ENCODE measurements at regions of chr10 and their contacts with region 1.

Region 1: GRCh38 chr10:122565728-122566206 is 5.2 kb downstream of the DMBT1 start:
- DNase-seq: peak; percentile 85
- ATAC-seq: peak; percentile 79
- H3K4me3 ChIP-seq: peak overlapping the region; percentile 25 to 38
- H3K27ac ChIP-seq: no peak overlapping the region
- H3K4me1 ChIP-seq: peaks cover 0 to 4% of the 10 kb centered on the region in 2 experiments; a peak in 1 of 4 replicates
- H3K27me3 ChIP-seq: peaks cover 47% of the 10 kb centered on the region
- CTCF ChIP-seq: peak; percentile 88 to 98 (median 96)
- POLR2A ChIP-seq: no peak
- RAD21 ChIP-seq: peak; percentile 99

Region 2: DNA sequence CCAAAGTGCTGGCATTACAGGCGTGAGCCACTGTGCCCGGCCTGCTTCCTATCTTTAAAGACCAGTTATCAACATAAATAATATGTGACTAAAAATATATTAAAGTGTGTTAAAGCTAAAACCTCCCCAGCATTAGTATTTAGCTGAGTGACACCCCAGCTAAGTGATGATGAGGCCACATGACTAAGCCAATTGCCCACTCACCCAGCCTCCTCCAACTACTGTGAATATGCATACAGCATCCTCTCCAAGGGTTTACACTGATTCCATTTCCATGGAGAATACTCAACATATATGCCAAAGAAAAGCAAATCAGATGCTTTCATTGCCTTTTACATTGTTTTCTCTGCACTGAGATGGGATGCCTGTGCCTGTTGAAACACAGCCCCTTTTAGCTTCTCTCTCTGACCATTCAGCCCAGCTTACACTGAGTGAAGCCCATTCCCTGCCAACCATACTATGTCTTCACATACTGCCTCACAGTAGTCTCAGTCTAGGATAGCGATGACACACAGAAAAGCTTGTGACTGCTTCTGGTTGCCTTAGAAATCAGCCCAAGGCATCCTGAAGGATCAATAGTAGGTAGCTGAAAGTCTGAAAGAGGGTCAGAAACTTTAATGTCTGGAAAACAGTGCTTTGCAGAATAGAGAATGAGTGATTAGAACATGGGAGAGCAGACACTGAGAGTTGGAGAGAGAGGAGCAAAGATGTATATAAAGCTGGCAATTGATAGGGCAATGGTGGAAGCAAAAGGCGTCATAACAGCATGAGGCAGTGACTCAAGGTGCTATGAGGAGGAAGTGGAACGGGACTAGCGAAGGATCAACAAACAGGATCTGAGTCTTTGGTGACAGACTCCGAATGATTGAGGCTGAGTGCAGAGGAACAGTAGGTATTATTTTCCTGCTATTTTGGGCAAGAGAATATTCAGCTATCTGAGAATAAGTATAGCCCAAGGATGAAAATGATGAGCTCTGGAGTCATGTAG is 618.1 kb before region 1 on chr10:
- CTCF ChIA-PET with region 1: no interaction called
- POLR2A ChIA-PET with region 1: no interaction called
- RAD21 ChIA-PET with region 1: no interaction called
- intact Hi-C with region 1: no loop called
- DNase-seq: no peak
- ATAC-seq: no peak
- H3K4me3 ChIP-seq: no peak overlapping the region
- H3K27ac ChIP-seq: no peak overlapping the region
- H3K4me1 ChIP-seq: no peaks in the 10 kb centered on the region
- H3K27me3 ChIP-seq: no peaks in the 10 kb centered on the region
- CTCF ChIP-seq: no peak
- POLR2A ChIP-seq: no peak
- RAD21 ChIP-seq: no peak

Region 3: DNA sequence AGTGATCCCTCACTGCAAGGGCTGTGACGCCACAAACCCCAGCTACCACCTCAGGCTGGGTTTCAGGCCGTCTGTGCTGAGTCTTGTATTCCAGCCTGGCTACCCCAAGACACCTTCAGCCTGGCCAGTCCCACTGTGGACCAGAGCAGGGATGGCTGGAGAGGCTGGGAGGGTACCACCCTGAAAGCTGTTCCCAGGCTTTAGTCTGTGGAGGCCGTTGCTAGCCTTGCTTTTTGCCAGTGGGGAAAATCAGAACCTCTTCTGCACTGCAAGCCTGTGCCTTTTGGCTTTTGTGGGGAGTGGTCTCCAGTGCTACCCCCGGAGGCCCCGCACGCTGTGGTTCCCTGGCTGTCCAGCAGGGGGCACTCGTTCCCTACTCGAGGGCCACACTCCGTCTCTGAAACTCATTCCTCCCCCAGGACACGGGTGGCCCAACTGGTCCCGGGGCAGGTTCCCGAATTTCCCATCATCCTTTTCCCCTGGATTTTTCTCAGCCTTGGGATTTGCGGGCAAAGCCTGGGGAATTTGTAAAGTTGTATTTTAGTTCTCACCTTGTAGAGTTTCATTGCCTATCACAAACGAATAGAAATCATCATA is 423.0 kb before region 1 on chr10:
- CTCF ChIA-PET with region 1: interaction called, 6 read pairs
- POLR2A ChIA-PET with region 1: no interaction called
- RAD21 ChIA-PET with region 1: no interaction called
- intact Hi-C with region 1: loop called (anchors 10 kb)
- DNase-seq: no peak
- ATAC-seq: peak; percentile 52
- H3K4me3 ChIP-seq: no peak overlapping the region
- H3K27ac ChIP-seq: no peak overlapping the region; the same call in 1 of the 2 replicates
- H3K4me1 ChIP-seq: peaks cover 31 to 45% of the 10 kb centered on the region in 2 experiments
- H3K27me3 ChIP-seq: no peaks in the 10 kb centered on the region
- CTCF ChIP-seq: peak; percentile 70 to 100 (median 99)
- POLR2A ChIP-seq: no peak
- RAD21 ChIP-seq: peak; percentile 92

Region 4: DNA sequence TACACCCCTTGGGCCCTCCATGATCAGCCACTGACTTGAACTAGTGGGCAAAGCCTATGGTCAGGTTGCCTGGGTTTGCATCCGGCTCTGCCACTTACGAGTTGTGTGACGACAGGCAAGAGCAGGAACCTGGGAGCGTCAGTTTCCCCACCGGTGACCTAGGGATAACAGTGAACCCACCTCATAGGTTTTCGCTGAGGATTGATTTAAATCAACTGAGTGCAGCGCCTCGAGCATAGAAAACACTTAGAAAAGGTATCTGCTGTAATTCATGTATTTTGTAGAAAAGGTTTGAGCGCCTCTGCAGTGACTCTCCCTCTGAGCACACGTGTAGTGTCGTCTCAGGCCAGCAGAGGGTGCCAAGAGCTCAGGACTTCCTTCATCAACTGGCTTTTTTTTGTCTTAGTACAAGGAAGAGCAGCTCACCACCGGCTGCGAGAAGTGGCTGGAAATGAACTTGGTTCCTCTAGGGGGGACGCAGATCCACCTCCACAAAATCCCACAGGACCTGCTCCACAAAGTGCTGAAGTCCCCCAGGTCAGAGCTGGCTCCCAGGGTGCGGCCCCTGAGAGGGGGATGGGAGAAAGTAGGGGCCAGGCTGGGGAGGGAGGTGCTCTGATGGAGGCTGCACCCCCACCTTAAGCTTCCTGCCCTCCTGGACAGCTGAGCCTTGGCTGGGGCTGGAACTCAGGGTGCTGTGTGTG is 267.0 kb before region 1 on chr10:
- CTCF ChIA-PET with region 1: interaction called, 73 read pairs
- POLR2A ChIA-PET with region 1: interaction called, 5 read pairs
- RAD21 ChIA-PET with region 1: interaction called, 8 to 13 read pairs
- intact Hi-C with region 1: loop called (anchors 1 kb)
- DNase-seq: peak; percentile 73
- ATAC-seq: peak; percentile 95
- H3K4me3 ChIP-seq: peak overlapping the region; percentile 22 to 35
- H3K27ac ChIP-seq: no peak overlapping the region; the same call in 1 of the 2 replicates
- H3K4me1 ChIP-seq: peaks cover 0 to 18% of the 10 kb centered on the region in 2 experiments; a peak in 2 of 4 replicates
- H3K27me3 ChIP-seq: no peaks in the 10 kb centered on the region
- CTCF ChIP-seq: peak; percentile 94 to 99 (median 98)
- POLR2A ChIP-seq: no peak
- RAD21 ChIP-seq: peak; percentile 100

Region 5: DNA sequence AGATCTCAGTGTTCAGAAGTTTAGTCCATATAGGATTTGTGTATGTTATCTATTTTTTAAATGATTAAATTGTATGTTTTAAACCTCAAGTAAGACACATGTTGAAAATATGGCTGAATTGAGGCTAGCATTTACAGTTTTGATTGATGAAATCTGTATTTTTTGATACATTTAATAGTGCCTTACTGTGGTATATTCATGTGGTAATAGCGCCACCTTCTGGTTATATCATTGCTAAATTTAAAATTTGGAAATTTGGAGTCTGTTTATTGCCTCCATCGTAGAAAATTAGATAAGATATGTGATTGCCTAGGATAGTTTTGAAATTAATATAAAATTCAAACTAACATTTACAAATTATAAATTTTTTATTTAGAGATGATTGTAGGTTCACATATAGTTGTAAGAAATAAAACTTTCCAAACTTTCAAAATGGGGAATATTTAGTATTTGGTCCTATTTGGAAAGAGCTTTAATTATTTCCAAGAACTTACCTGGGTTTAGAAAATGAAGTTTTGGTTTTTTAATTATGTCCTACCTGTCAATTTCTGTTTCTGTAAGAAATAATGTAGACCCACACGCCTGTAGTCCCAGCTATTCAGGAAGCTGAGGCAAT is 130.4 kb before region 1 on chr10:
- CTCF ChIA-PET with region 1: interaction called, 22 read pairs
- POLR2A ChIA-PET with region 1: no interaction called
- RAD21 ChIA-PET with region 1: interaction called, 8 to 12 read pairs
- intact Hi-C with region 1: loop called (anchors 1 kb)
- DNase-seq: peak; percentile 45
- ATAC-seq: peak; percentile 76
- H3K4me3 ChIP-seq: no peak overlapping the region
- H3K27ac ChIP-seq: no peak overlapping the region
- H3K4me1 ChIP-seq: no peaks in the 10 kb centered on the region
- H3K27me3 ChIP-seq: no peaks in the 10 kb centered on the region
- CTCF ChIP-seq: peak; percentile 44 to 96 (median 86)
- POLR2A ChIP-seq: no peak
- RAD21 ChIP-seq: peak; percentile 95

Region 6: DNA sequence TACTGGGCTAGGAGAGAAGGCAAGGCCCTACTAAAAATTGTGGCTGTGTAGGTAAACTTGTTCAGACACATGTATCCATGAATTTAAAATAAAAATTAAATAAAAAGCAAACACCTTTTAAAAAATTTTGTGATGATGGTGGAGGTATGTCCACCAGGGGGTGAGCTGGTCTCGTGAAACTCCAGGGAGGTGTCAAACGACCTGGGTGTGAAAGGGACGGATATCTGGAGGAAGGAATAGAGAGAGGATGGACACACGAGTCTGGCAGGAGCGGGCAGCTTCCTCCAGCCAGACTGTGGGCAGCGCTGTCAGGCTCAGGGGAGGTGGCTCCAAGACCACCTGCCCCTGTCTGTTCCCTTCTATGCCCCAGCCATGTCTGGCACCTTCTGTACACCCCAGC is 40.0 kb before region 1 on chr10:
- CTCF ChIA-PET with region 1: interaction called, 16 read pairs
- POLR2A ChIA-PET with region 1: no interaction called
- RAD21 ChIA-PET with region 1: interaction called, 3 read pairs
- intact Hi-C with region 1: loop called (anchors 1 kb)
- DNase-seq: peak; percentile 23
- ATAC-seq: peak; percentile 84
- H3K4me3 ChIP-seq: no peak overlapping the region
- H3K27ac ChIP-seq: no peak overlapping the region
- H3K4me1 ChIP-seq: no peaks in the 10 kb centered on the region
- H3K27me3 ChIP-seq: peaks cover 27% of the 10 kb centered on the region; the same call in 1 of the 2 replicates
- CTCF ChIP-seq: peak; percentile 55 to 77 (median 60)
- POLR2A ChIP-seq: no peak
- RAD21 ChIP-seq: peak; percentile 79

Region 7: DNA sequence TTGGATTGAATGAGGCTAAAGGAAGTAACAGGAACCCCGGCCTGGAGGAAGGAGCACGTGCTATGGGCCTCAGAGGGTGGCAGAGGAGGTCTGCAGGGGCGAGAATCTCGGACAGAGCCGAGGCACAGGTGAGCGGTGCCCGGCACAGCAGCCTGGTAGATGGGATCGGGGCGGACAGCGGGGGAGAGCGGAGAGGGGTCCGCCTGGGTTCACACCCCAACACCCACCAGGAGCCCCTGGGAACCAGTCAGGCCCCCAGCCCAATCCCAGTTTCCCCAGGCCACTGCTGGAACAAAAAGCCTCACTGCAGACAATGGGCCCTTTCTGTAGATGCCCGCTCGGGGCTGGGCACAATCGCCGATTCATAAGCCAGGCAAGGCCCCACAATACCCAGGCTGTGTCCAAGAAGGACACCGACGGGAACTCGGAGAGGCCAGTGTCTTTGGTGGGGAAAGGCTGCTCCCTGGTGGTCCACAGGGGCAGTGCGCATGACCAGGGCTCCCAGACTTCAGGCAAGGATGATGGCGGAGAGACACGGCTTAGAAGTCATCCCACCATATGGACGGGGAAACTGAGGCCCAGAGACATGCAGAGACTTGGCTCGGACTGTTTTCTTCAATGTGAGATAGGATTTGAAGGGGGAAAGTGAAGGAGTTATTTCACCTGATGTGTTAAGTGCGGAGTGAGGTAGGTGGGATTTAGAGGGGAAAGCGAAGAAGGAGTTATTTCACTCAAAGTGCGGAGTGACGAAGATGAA is 993.5 kb after region 1 on chr10:
- CTCF ChIA-PET with region 1: no interaction called
- POLR2A ChIA-PET with region 1: no interaction called
- RAD21 ChIA-PET with region 1: no interaction called
- intact Hi-C with region 1: loop called (anchors 2 kb)
- DNase-seq: peak; percentile 60
- ATAC-seq: peak; percentile 97
- H3K4me3 ChIP-seq: no peak overlapping the region
- H3K27ac ChIP-seq: no peak overlapping the region
- H3K4me1 ChIP-seq: 0 out of 4 replicates have a peak, but pooled peaks cover 0 to 3% of the 10 kb centered on the region in 2 experiments
- H3K27me3 ChIP-seq: no peaks in the 10 kb centered on the region
- CTCF ChIP-seq: peak; percentile 95 to 100 (median 100)
- POLR2A ChIP-seq: no peak
- RAD21 ChIP-seq: peak; percentile 99

Measured in HCT116 (cell line).